ENCODE measurements at regions of chr11 and their contacts with region 1.

Region 1: GRCh38 chr11:66311965-66312548 is 4.8 kb downstream of the CD248 start:
- DNase-seq: peak; percentile 98
- ATAC-seq: peak; percentile 79
- H3K4me3 Mint-ChIP-seq: peak overlapping the region; percentile 93
- H3K27ac Mint-ChIP-seq: peak overlapping the region; percentile 97
- H3K4me1 Mint-ChIP-seq: peaks cover 30% of the 10 kb centered on the region
- H3K27me3 Mint-ChIP-seq: no peaks in the 10 kb centered on the region
- CTCF ChIP-seq: peak; percentile 95

Region 2: DNA sequence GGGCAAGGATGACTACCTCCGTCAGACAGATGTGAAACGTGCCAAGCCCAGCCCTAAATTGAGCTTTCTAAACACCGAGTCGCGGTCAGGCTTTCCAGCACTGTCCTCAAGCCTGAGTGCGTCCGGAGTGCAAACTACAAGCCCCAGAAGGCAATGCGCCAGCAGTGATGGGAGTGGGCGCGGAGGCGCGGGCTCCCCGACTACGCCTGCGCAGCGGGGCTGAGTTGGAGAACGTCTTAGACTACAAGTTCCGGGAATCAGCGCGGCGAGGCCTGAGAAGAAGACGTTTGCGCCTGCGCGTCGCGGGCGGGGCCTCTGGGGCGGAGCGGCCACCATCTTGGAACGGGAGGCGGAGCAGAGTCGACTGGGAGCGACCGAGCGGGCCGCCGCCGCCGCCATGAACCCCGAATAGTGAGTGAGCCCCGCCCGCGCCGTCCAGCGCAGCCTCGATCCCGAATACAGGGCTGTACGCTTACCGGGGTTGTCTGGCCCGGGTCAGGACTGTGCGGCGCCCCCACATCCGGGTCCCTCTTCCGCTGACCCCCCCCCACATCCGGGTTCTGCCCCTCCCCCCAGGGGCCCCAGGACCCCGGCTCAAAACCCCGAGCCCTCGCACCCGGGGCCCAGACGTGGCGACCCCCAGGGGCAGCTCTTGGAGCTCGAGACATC is 43.6 kb before region 1 on chr11 and contains the start of gene RAB1B:
- CTCF ChIA-PET with region 1: no interaction called
- POLR2A ChIA-PET with region 1: interaction called, 16 read pairs
- intact Hi-C with region 1: loop called (anchors 1 kb)
- DNase-seq: peak; percentile 98
- ATAC-seq: peak; percentile 76
- H3K4me3 Mint-ChIP-seq: peak within 1 kb of the TSS; percentile 90
- H3K27ac Mint-ChIP-seq: peak within 1 kb of the TSS; percentile 97
- H3K4me1 Mint-ChIP-seq: peaks cover 32% of the 10 kb centered on the region
- H3K27me3 Mint-ChIP-seq: no peaks in the 10 kb centered on the region
- CTCF ChIP-seq: no peak
- total RNA-seq, gene RAB1B: 115 and 118 TPM in 2 replicates

Region 3: DNA sequence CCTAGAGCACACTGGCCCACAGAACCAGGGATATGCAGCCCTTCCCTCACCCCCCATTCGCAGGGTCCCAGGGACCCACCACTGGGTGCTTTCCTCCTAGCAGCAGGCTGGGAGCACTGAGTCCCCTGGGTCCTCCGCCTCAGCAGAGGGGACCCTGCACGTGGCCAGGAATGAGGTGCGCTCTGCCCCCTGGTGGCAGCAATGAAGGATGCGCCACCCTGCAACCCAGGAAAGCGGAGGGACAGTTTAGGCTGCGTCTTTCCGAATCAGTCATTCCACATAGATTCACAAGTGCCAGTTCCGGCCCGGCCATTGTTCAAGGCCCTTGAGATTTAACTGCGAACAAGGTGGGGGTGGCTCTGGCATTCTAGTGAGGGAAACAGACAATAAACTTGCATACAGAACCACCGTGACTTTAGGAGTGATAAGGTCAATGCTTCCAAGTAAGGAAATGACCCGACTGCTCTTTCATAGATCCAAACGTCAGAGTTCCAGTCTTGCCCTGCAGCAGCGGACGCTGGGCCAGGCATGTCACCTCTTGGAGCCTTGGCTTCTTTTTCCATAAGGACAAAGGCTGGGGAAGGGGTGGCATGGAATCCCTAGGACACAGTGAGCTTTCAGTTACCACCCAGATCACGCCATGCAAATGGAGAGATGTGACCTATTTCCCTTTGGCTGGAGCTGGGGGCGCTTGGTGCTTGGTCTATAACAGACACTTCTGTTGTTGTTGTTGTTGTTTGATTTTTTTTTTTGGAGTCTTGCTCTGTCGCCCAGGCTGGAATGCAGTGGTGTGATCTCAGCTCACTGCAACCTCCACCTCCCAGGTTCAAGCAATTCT is 16.5 kb after region 1 on chr11:
- CTCF ChIA-PET with region 1: interaction called, 67 read pairs
- POLR2A ChIA-PET with region 1: interaction called, 12 read pairs
- intact Hi-C with region 1: loop called (anchors 1 kb)
- DNase-seq: peak; percentile 79
- ATAC-seq: peak; percentile 99
- H3K4me3 Mint-ChIP-seq: peak overlapping the region; percentile 46
- H3K27ac Mint-ChIP-seq: no peak overlapping the region
- H3K4me1 Mint-ChIP-seq: peaks cover 22% of the 10 kb centered on the region
- H3K27me3 Mint-ChIP-seq: no peaks in the 10 kb centered on the region
- CTCF ChIP-seq: peak; percentile 63

Region 4: DNA sequence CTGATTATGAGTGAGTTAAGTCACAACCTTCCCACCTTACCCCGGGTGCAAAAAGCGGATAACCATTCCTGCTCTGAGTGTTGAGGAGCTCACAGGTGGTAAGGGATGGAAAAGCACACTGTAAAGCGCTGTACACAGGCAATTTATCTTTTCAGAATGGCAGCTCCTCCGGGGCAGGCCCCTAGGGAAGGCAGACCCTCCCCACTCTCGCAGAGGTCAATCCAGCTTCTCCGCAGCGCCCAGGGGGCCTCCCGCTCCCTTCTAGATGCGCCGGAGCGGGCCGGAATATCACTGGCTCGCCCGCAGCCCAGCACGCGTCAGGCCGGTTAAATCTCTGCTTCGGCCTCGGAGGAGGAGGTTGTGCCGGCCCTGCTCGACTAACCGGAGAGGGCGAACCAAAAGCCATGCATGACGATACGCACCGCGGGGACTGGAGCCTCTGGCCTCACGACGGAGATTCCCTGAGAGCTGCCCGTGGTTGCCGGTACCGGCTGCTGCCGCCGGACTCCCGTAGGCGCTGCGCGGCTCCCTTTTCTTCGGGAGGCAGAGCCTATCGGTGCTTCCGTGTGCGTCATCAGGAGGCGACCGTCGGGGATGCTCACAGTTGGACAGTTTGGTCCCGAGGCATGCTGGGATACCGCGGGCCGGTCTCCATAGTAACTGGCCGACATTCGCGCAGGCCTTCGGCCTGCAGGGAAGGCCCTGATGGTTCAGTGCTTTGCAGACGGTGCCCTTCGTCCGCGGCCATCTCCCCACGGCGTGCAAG is 32.7 kb after region 1 on chr11 and contains the start of gene BRMS1:
- CTCF ChIA-PET with region 1: interaction called, 17 read pairs
- POLR2A ChIA-PET with region 1: interaction called, 24 read pairs
- intact Hi-C with region 1: loop called (anchors 1 kb)
- DNase-seq: peak; percentile 93
- ATAC-seq: peak; percentile 82
- H3K4me3 Mint-ChIP-seq: peak within 1 kb of the TSS; percentile 96
- H3K27ac Mint-ChIP-seq: peak within 1 kb of the TSS; percentile 93
- H3K4me1 Mint-ChIP-seq: peaks cover 45% of the 10 kb centered on the region
- H3K27me3 Mint-ChIP-seq: peaks cover 2% of the 10 kb centered on the region
- CTCF ChIP-seq: no peak
- total RNA-seq, gene BRMS1: 56.9 and 59.2 TPM in 2 replicates

Region 5: DNA sequence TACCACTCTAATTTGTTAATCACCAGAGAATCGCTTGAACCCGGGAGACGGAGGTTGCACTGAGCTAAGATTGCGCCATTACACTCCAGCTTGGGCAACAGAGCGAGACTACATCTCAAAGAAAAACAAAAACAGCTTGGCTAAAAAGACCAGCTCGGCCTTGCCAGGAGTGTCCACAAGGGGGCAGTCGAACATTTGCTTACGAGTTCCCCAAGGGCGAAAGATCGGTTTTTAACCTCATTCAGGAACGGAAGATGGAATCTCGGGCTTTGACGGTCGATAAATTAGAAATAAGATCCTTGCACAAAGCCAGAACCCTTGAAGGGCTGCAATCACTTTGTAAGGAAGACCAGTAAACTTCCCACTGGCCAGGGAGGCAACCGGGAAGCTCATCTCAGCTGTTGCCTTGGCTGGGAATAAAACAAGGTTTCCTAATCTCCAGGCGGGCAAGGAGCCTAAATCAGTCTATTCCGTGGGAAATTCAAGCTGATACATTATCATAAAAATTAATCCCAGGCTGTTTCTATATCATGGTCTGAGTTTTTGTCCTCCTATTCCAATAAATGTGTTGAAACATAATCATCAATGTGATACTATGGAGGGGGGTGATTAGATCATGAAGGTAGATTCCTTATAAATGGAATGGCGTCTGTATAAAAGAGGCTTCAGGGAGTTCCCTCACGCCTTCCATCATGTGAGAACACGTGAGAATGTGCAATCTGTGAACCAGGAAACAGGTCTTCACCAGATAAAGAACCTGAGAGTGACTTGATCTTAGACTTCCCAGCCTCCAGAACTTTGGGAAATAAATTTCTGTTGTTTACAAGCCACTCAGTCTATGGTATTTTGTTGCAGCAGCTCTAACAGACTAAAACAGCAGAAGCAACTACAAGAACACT is 74.4 kb after region 1 on chr11:
- CTCF ChIA-PET with region 1: interaction called, 29 read pairs
- POLR2A ChIA-PET with region 1: interaction called, 6 read pairs
- intact Hi-C with region 1: loop called (anchors 1 kb)
- DNase-seq: peak; percentile 68
- ATAC-seq: peak; percentile 84
- H3K4me3 Mint-ChIP-seq: peak overlapping the region; percentile 17
- H3K27ac Mint-ChIP-seq: no peak overlapping the region
- H3K4me1 Mint-ChIP-seq: peaks cover 9% of the 10 kb centered on the region
- H3K27me3 Mint-ChIP-seq: no peaks in the 10 kb centered on the region
- CTCF ChIP-seq: no peak

Region 6: DNA sequence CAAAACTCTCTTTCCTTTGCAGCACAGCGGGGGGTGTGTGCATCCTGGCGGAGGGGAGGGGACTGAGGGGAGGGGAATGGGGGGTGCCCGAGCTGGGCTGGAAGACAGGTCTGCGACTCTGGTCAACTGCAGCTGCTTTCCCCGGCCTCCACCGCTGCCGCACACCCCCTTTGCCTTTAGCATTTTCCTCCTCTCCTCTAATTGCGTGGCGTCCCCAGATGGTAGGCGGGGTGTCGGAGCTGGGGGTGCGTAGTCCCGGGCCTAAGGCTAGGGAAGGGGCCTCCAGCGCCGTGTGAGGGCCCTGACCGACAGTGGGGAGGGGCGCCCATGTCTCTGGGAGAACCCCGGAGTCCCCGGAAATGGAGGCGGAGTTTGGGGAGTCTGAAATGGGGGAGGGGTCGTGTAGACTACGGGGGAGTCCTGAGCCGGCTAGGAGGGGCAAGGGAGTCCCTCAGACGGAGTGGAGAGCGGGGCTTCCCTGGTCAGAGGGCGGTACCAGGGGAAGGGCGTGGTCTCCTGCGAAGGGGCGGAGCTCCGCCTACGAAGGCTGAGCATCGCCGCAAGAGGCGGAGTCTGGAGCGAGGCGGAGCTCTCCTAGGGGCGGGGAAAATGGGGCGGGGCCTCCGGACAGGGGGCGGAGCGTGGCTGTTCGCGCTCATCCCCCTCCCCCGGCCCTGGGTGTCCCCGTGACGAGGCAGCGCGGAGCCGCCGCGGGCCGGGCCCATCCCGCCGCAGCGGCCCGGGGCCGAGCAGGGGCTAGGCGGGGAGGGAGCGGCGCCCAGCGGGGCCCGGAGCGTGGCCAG is 154.4 kb after region 1 on chr11 and contains the start of gene PELI3:
- CTCF ChIA-PET with region 1: no interaction called
- POLR2A ChIA-PET with region 1: interaction called, 4 read pairs
- intact Hi-C with region 1: loop called (anchors 1 kb)
- DNase-seq: peak; percentile 92
- ATAC-seq: peak; percentile 92
- H3K4me3 Mint-ChIP-seq: peak within 1 kb of the TSS; percentile 88
- H3K27ac Mint-ChIP-seq: peak within 1 kb of the TSS; percentile 84
- H3K4me1 Mint-ChIP-seq: peaks cover 43% of the 10 kb centered on the region
- H3K27me3 Mint-ChIP-seq: no peaks in the 10 kb centered on the region
- CTCF ChIP-seq: no peak
- total RNA-seq, gene PELI3: 8.5 and 9.1 TPM in 2 replicates

Region 7: DNA sequence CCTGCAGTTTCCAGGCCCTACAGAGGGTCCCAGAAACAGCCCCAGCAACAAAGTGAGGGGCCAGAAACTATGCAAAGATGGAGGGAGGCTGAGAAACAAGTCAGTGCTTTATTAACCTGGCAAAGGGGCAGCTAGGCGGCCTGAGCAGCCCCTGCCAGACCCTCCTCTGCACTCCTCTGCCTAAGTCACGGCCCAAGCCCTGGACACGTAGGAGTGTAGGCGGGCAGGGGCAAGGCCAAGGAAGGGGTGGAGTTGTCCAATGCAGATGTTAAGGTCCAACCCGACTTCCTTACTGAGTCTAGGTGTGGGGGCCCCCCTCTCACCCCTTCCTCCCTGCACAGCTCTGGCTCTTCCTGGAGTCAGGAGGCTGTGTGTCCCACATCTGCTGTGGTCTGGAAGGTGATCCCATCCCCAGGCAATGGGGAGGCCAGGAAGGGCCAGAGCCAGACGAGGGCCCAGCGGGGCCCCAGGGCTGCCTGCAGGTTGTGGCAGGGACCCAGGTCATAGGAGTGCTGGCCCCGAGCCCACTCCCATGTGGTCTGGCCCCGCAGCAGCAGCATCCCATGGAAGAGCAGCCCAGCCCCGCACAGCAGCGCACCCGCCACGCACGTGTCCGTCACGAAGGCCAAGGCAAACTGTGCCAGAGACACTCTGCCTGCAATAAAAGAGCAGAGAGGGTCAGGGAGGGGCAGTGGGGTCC is 227.3 kb after region 1 on chr11:
- CTCF ChIA-PET with region 1: no interaction called
- POLR2A ChIA-PET with region 1: no interaction called
- intact Hi-C with region 1: no loop called
- DNase-seq: no peak
- ATAC-seq: no peak
- H3K4me3 Mint-ChIP-seq: no peak overlapping the region
- H3K27ac Mint-ChIP-seq: no peak overlapping the region
- H3K4me1 Mint-ChIP-seq: peaks cover 19% of the 10 kb centered on the region
- H3K27me3 Mint-ChIP-seq: no peaks in the 10 kb centered on the region
- CTCF ChIP-seq: no peak

Region 8: GRCh38 chr11:66592457-66593302 is 280.6 kb after region 1 on chr11 and contains the starts of genes CCDC87 and CCS:
- CTCF ChIA-PET with region 1: no interaction called
- POLR2A ChIA-PET with region 1: no interaction called
- intact Hi-C with region 1: loop called (anchors 1 kb)
- DNase-seq: peak; percentile 98
- ATAC-seq: peak; percentile 97
- H3K4me3 Mint-ChIP-seq: peak within 1 kb of the TSS; percentile 100
- H3K27ac Mint-ChIP-seq: peak within 1 kb of the TSS; percentile 99
- H3K4me1 Mint-ChIP-seq: peaks cover 36% of the 10 kb centered on the region
- H3K27me3 Mint-ChIP-seq: no peaks in the 10 kb centered on the region
- CTCF ChIP-seq: no peak
- total RNA-seq, gene CCDC87: 0.22 and 0.31 TPM in 2 replicates
- total RNA-seq, gene CCS: 59.0 and 65.3 TPM in 2 replicates